Prostate gland (tissue), 2 donors: ENCODE measurements at regions of chr11 and their contacts with region 1.

Region 1: DNA sequence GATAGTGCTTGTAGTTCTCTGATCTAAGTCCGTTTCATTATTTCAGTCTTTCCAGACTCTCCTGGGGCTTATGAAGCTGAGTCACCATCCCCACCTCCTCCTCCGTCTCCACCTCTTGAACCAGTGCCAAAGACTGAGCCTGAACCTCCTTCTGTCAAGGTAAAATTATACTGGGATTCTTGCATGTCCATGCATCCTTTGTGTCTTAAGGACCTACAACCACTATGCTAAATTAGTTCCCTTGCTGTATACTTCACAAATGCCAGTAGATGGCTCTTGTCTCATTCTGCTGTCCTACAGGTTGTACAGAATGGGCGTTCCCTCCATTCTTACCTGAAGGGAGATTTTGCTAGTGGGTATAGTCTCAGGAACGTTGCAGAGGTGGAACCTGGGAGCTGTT is 42.2 kb downstream of the POLD3 start:
- DNase-seq: no peak
- H3K4me3 ChIP-seq: no peak overlapping the region
- H3K27ac ChIP-seq: no peak overlapping the region
- H3K4me1 ChIP-seq: no peaks in the 10 kb centered on the region
- H3K27me3 ChIP-seq: no peaks in the 10 kb centered on the region
- CTCF ChIP-seq: peak in 3 of 4 experiments; percentile 45 to 59 (median 54)
- POLR2A ChIP-seq: no peak

Region 2: DNA sequence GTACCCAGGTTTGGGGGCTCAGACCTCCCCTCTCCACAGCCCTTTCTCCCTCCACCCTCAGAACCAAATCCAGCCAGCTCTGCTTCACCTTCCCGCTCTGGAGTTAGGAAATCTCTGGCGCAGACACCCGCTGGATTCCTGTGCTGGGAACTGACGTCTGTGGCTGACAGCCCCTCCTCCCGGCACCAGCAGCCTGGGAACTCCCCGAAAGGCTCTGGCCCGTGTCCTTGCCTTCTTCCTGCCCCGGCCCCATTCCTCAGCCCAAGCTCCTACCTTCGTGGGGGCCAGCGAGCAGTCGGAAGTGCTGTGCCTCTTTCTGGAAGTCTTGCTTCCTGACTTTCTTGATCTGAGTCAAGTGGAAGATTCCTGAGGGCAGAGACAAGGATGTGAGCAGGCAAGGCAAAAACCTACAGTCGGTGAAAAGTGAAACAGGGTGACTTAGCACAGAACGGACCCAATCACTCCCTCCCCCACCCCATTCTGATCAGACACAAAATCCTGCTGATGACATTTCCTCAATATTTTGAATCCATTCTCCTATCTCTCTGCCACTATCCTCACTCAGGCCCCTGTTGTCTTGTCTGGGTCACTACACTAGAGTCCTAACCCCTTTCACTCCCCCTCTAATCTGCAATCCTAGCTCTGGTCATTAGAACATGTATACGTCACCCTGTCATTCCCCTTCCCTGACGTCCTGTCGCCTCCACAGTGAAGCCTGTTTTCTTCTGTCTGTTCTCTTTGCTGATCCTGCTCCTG is 62.6 kb after region 1 on chr11:
- intact Hi-C with region 1: no loop called
- DNase-seq: peak; percentile 79
- H3K4me3 ChIP-seq: no peak overlapping the region
- H3K27ac ChIP-seq: peak overlapping the region; percentile 19 to 63
- H3K4me1 ChIP-seq: no peaks in the 10 kb centered on the region
- H3K27me3 ChIP-seq: no peaks in the 10 kb centered on the region
- CTCF ChIP-seq: no peak
- POLR2A ChIP-seq: no peak

Region 3: GRCh38 chr11:74726547-74727182 is 92.1 kb after region 1 on chr11:
- intact Hi-C with region 1: loop called (anchors 5 kb)
- DNase-seq: peak; percentile 68
- H3K4me3 ChIP-seq: no peak overlapping the region
- H3K27ac ChIP-seq: no peak overlapping the region
- H3K4me1 ChIP-seq: no peaks in the 10 kb centered on the region
- H3K27me3 ChIP-seq: peaks cover 3% of the 10 kb centered on the region
- CTCF ChIP-seq: peak; percentile 33 to 94 (median 84)
- POLR2A ChIP-seq: no peak